PC-9 (cell line): ENCODE measurements at regions of chr2 and their contacts with region 1.

Region 1: DNA sequence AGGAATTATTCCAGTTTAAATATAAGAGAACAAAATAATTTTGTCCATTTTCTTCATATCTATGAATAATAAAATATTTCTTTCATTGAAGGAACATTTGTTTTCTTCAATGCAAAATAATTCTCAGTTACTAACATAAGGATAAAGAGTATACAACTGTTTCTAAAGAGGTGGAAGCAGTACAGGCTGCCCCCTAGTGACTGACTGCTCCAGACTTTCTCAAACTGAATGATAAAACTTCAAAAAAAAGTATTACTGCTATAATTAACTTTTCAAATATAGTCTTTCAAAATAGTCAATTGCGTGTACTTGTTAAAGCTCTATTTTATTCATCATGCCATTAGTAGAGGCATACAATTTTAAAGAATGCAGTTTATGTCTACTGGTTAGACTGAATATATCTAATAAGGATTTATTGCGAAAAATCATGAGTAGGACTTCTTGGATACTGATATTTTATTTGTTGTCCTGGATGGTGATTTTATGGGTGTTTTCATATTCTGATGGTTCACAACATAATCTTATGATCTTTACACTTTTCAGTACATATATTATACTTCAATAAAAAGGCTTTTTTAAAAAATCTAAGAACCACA is 100.1 kb downstream of the WDPCP start:
- DNase-seq: peak in 1 of 2 experiments; percentile 12
- H3K4me3 ChIP-seq: no peak overlapping the region
- H3K27ac ChIP-seq: no peak overlapping the region
- H3K4me1 ChIP-seq: no peaks in the 10 kb centered on the region
- H3K27me3 ChIP-seq: no peaks in the 10 kb centered on the region
- CTCF ChIP-seq: peak; percentile 84

Region 2: DNA sequence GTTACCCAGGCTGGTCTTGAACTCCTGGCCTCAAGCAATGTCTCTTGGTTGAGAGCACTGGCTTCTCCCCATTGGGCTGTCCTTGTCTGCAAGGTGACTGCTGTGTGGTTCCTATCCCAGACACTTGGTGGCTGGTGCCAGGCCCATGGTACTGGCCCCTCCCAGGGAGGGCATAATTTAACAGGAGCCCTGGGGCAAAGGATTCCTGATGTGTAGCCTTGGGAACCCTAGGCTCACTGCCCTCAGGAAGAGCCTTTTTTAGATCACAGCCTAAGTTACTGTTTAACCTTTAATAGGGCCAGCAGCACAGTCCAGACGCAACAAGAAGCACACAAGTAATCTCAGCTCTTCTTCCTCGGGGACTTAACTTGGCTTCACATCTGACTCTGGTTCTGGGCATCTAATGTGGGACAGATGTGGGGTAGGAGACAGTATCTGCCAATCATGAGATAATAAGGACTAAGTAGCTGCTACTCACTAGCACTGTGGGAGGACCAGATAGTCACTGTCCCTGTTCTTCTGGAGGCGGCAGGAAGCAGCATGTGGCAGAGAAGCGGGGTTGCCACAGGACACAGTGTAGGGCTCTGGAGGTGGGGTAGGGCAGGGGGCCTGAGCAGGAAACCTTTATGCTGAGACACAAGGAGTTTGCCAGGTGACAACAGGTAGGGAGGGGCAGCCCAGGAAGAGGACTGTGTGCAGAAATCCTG is 1118.6 kb before region 1 on chr2:
- CTCF ChIA-PET with region 1: no interaction called
- POLR2A ChIA-PET with region 1: no interaction called
- intact Hi-C with region 1: no loop called
- DNase-seq: no peak
- H3K4me3 ChIP-seq: no peak overlapping the region
- H3K27ac ChIP-seq: no peak overlapping the region
- H3K4me1 ChIP-seq: no peaks in the 10 kb centered on the region
- H3K27me3 ChIP-seq: no peaks in the 10 kb centered on the region
- CTCF ChIP-seq: no peak

Region 3: DNA sequence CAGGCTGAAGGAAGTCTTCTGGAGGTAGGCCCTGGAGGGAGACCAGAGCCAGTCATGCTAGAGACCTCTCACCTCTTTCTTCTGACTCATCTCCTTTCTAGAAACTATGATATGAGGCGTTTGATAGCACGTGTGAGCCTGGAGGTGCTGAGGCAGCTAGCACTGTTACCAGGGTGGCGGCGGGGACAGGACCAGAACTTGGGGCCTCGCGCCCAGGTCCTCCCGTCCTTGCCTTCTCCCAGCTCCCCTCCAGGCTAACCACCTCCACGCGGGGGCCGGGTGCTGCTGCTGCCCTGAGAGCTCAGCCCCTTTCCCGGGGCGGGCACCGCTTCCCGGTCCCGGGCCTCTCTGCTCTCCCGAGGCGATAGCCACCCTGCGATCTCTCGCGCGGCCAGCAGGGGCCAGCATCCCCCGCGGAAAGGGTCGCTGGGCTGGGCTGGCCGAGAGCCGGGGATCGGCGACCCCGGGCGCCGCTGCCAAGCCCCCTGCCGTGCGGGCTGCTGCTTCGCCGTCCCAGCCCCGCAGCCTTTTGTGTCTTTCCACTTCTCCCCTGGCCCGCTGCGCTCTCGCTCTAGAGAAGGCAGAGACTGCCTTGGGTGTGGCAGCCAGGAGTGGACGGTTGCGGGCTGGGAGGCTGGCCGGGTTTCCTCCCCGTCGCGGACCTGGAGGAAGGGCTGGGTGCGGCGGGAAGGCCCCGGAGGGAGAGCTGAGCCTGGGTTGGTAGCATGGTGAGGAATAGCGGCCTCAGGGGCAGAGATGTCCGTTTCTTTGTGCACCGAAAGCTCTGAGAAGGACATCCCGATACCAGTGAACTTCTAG is 1031.3 kb before region 1 on chr2:
- CTCF ChIA-PET with region 1: no interaction called
- POLR2A ChIA-PET with region 1: no interaction called
- intact Hi-C with region 1: loop called (anchors 10 kb)
- DNase-seq: peak; percentile 85 to 88
- H3K4me3 ChIP-seq: peak overlapping the region; percentile 72
- H3K27ac ChIP-seq: peak overlapping the region; percentile 72
- H3K4me1 ChIP-seq: peaks cover 16% of the 10 kb centered on the region
- H3K27me3 ChIP-seq: no peaks in the 10 kb centered on the region
- CTCF ChIP-seq: peak; percentile 98

Region 4: DNA sequence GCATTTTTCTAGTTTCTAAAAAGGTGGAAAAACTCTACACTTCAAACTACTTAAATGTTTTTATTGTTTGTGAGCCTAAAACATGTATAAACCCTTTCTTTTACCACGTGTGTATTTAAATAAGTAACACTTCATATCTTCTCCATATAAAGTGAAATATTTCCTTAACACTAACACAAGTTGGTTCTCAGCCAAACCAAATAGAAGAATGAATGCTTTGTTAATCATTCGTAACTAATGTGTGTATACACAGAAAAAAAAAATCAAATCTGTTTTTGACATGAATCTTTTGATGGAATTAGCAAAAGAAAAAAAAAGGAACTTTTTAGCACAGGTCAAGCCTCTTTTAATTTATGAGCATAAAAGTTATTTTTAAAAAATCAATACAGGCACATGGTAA is 693.4 kb before region 1 on chr2:
- CTCF ChIA-PET with region 1: no interaction called
- POLR2A ChIA-PET with region 1: no interaction called
- intact Hi-C with region 1: loop called (anchors 5 kb)
- DNase-seq: peak in 1 of 2 experiments; percentile 81
- H3K4me3 ChIP-seq: no peak overlapping the region
- H3K27ac ChIP-seq: no peak overlapping the region
- H3K4me1 ChIP-seq: peaks cover 16% of the 10 kb centered on the region; the same call in 1 of the 2 replicates
- H3K27me3 ChIP-seq: no peaks in the 10 kb centered on the region
- CTCF ChIP-seq: no peak

Region 5: DNA sequence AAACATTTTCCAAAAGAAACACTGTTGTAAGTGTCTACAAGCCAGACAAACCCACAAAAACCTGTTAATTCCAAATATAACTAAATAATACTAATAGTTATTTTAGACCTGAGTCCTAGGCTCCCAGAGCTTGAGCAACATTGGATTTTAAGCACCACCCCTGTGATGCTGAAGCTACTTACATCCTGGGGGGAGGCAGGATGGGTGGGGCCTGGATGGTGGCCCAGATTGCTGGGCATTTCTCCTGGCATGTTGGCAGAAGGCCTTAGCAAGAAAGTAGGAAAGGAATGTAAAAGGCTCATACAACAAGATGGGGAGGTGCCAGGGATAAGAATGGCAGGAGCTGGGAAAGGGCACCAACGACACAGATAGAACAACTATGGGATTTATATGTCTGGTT is 488.3 kb before region 1 on chr2:
- CTCF ChIA-PET with region 1: no interaction called
- POLR2A ChIA-PET with region 1: no interaction called
- intact Hi-C with region 1: loop called (anchors 10 kb)
- DNase-seq: peak in 1 of 2 experiments; percentile 23
- H3K4me3 ChIP-seq: no peak overlapping the region
- H3K27ac ChIP-seq: no peak overlapping the region
- H3K4me1 ChIP-seq: no peaks in the 10 kb centered on the region
- H3K27me3 ChIP-seq: no peaks in the 10 kb centered on the region
- CTCF ChIP-seq: no peak

Region 6: GRCh38 chr2:63569740-63570139 is 81.5 kb after region 1 on chr2:
- CTCF ChIA-PET with region 1: no interaction called
- POLR2A ChIA-PET with region 1: interaction called, 10 read pairs
- intact Hi-C with region 1: no loop called
- DNase-seq: no peak
- H3K4me3 ChIP-seq: no peak overlapping the region
- H3K27ac ChIP-seq: no peak overlapping the region
- H3K4me1 ChIP-seq: no peaks in the 10 kb centered on the region
- H3K27me3 ChIP-seq: no peaks in the 10 kb centered on the region
- CTCF ChIP-seq: no peak

Region 7: DNA sequence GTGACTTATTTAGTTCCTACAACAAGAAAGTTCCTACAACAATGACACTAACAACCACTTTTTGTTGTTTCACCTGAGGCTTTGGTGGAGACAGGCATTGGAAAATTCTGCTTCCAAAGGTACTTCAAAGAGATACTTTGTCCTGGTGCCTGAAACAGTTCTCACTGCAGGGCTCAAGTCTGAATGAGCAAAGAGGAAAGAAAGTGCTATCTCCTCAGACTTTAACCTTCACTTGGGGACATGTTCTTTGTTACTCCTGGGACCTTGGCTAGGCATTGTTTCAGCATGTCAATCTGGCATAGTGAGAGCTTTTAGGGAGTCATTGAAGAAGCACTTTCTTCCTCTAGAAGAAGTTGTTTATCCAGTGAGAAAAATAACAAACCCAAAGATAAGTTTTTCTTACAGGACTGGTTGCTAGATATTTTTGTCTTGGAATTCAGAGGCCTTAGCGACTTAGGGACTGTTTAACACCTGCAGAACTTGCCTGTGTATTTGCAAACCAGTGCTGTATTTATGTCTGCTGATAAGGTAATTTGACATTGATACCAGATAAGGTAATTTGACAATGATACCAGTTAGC is 112.8 kb after region 1 on chr2:
- CTCF ChIA-PET with region 1: no interaction called
- POLR2A ChIA-PET with region 1: no interaction called
- intact Hi-C with region 1: no loop called
- DNase-seq: no peak
- H3K4me3 ChIP-seq: no peak overlapping the region
- H3K27ac ChIP-seq: peak overlapping the region; percentile 16; the same call in 1 of the 2 replicates
- H3K4me1 ChIP-seq: no peaks in the 10 kb centered on the region
- H3K27me3 ChIP-seq: no peaks in the 10 kb centered on the region
- CTCF ChIP-seq: no peak

Region 8: GRCh38 chr2:63654959-63655358 is 166.7 kb after region 1 on chr2:
- CTCF ChIA-PET with region 1: no interaction called
- POLR2A ChIA-PET with region 1: no interaction called
- intact Hi-C with region 1: no loop called
- DNase-seq: no peak
- H3K4me3 ChIP-seq: no peak overlapping the region
- H3K27ac ChIP-seq: no peak overlapping the region
- H3K4me1 ChIP-seq: no peaks in the 10 kb centered on the region
- H3K27me3 ChIP-seq: no peaks in the 10 kb centered on the region
- CTCF ChIP-seq: no peak

Region 9: DNA sequence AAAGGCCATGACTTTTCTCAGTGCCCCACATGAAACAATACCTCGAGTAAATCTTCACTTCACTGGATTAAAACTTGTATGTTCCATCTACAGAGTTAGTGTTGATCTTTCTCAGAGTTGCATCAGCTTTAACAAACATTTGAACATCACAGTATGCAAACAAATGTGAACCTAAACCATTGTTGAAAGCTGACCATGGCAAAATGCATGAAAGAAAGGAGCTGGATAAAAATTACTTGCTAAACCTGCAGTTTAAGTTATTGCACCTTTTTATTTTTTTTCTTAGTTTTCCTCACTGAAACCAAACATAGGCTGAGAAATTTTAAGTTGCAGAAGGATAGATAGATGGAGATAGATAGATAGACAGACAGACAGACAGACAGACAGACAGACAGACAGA is 246.3 kb after region 1 on chr2:
- CTCF ChIA-PET with region 1: no interaction called
- POLR2A ChIA-PET with region 1: no interaction called
- intact Hi-C with region 1: no loop called
- DNase-seq: no peak
- H3K4me3 ChIP-seq: no peak overlapping the region
- H3K27ac ChIP-seq: peak overlapping the region; percentile 32; the same call in 1 of the 2 replicates
- H3K4me1 ChIP-seq: peaks cover 23% of the 10 kb centered on the region
- H3K27me3 ChIP-seq: no peaks in the 10 kb centered on the region
- CTCF ChIP-seq: no peak